ENCODE measurements at regions of chr14 and their contacts with region 1.

Region 1: GRCh38 chr14:98167705-98168104 is 1104.3 kb downstream of the BCL11B start:
- DNase-seq: peak in 2 of 5 donors; percentile 22 to 54
- H3K4me3 ChIP-seq: peak overlapping the region in 1 of 2 donors; percentile 15
- H3K4me3 Mint-ChIP-seq: peak overlapping the region in 7 of 8 donors; percentile 60 to 90 (median 71)
- H3K27ac ChIP-seq: peak overlapping the region; percentile 45
- H3K27ac Mint-ChIP-seq: peak overlapping the region; percentile 79 to 99 (median 90)
- H3K4me1 ChIP-seq: peaks cover 63% of the 10 kb centered on the region
- H3K4me1 Mint-ChIP-seq: peaks cover 53 to 82% (median 68%) of the 10 kb centered on the region in 4 donors
- H3K27me3 ChIP-seq: no peaks in the 10 kb centered on the region
- H3K27me3 Mint-ChIP-seq: no peaks in the 10 kb centered on the region

Region 2: GRCh38 chr14:98085751-98086150 is 82.0 kb before region 1 on chr14:
- CTCF ChIA-PET with region 1: no interaction called
- POLR2A ChIA-PET with region 1: no interaction called
- intact Hi-C with region 1: no loop called
- DNase-seq: no peak
- H3K4me3 ChIP-seq: no peak overlapping the region
- H3K4me3 Mint-ChIP-seq: no peak overlapping the region
- H3K27ac ChIP-seq: no peak overlapping the region
- H3K27ac Mint-ChIP-seq: no peak overlapping the region
- H3K4me1 ChIP-seq: no peaks in the 10 kb centered on the region
- H3K4me1 Mint-ChIP-seq: peaks cover 0 to 7% (median 3%) of the 10 kb centered on the region in 4 donors
- H3K27me3 ChIP-seq: no peaks in the 10 kb centered on the region
- H3K27me3 Mint-ChIP-seq: no peaks in the 10 kb centered on the region

Region 3: DNA sequence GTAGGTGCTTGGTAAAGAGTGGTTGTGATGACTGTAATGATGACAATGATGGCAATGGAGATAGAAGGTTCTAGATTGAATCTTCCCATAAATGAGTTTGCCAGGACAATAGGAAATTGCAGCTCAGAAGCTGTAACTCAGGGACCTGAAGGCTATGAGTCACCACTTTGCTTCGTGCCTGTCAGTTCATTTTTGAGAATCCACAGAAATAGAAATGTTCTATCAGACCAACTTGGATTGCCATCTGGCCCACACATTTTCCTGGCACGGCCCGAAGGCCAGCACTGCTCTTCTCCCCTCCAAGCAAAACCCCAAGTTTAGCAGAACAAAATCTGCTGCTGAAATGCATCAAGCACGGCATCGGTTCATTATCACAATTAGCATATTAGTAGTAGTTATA is 22.7 kb before region 1 on chr14:
- CTCF ChIA-PET with region 1: interaction called, 68 read pairs
- POLR2A ChIA-PET with region 1: interaction called, 44 read pairs
- intact Hi-C with region 1: no loop called
- DNase-seq: no peak
- H3K4me3 ChIP-seq: no peak overlapping the region
- H3K4me3 Mint-ChIP-seq: no peak overlapping the region
- H3K27ac ChIP-seq: no peak overlapping the region
- H3K27ac Mint-ChIP-seq: peak overlapping the region in 1 of 7 donors; percentile 53
- H3K4me1 ChIP-seq: peaks cover 38% of the 10 kb centered on the region
- H3K4me1 Mint-ChIP-seq: peaks cover 35 to 49% (median 37%) of the 10 kb centered on the region in 4 donors
- H3K27me3 ChIP-seq: no peaks in the 10 kb centered on the region
- H3K27me3 Mint-ChIP-seq: no peaks in the 10 kb centered on the region